Endothelial cell of umbilical vein (primary cell): ENCODE measurements at regions of chr12 and their contacts with region 1.

Region 1: GRCh38 chr12:88897723-88898122 is 317.5 kb upstream of the KITLG start:
- DNase-seq: peak; percentile 95
- H3K4me3 ChIP-seq: no peak overlapping the region
- H3K27ac ChIP-seq: peak overlapping the region; percentile 98
- H3K4me1 ChIP-seq: peaks cover 31% of the 10 kb centered on the region
- H3K27me3 ChIP-seq: no peaks in the 10 kb centered on the region
- CTCF ChIP-seq: no peak
- POLR2A ChIP-seq: no peak

Region 2: DNA sequence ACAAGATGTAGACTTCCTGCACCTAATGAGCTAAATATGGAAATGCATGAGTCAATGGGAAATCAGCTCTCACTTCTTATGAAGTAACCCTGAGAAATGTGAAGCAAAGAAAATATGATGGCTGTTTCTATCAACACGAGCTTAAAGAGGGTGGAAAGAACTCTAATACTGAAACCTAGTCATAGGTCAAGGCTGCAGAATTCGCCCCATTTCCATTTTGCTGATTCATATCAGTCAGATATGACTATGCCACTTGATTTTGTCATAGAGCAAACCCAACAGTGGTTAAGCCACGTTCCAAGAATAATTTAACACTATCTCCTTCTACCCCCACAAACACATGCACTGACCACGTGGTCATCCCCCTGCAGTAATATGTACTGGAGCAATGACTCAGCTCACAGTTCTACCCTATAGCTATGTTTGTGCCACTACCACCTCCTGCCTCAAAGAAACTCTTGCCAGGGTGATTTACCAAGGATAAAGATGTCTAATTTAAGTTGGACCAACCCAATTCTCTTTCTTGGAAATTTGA is 598.1 kb before region 1 on chr12:
- CTCF ChIA-PET with region 1: no interaction called
- POLR2A ChIA-PET with region 1: no interaction called
- dilution Hi-C with region 1: no loop called
- intact Hi-C with region 1: loop called (anchors 1 kb)
- DNase-seq: peak; percentile 96
- H3K4me3 ChIP-seq: no peak overlapping the region
- H3K27ac ChIP-seq: peak overlapping the region; percentile 88
- H3K4me1 ChIP-seq: peaks cover 27% of the 10 kb centered on the region
- H3K27me3 ChIP-seq: no peaks in the 10 kb centered on the region
- CTCF ChIP-seq: no peak
- POLR2A ChIP-seq: peak; percentile 31

Region 3: DNA sequence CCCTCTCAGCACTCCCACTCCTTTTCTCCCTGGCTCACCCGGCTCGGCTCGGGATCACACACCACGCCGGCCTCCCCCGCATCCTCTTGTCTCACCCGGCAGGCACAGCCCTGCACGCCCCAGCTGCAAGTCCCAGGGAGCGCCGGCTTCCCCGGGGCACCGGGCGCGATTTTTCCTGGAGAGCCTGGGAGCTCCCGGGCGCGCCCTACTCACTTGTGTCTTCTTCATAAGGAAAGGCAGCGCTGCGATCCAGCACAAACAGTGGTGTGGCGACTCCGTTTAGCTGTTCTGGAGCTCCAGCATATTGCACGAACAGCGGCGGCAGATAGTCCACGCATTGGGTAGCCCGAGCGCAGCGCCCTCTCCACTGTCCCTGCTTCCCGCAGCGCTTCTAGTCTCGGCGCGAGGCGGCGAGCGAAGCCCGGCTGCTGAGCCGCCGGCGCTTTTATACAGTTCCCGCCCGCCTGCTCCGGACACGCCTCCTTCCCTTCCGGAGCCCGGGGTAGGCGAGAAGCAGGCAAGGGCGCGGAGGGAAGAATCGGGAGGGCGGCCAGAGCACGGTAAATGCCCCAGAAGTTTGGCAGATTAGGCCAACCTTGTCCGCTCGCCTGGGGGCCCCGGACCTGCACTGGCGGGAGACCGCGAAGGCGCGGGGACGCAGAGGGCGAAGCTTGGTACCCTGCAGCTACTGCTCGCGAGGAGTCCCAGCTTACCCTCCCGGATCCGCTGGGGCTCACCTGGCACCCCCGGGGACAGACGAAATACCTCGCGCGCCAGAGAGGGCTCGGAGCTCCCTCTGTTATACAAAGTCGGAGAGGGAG is 317.5 kb before region 1 on chr12 and contains the start of gene KITLG:
- CTCF ChIA-PET with region 1: interaction called, 9 read pairs
- POLR2A ChIA-PET with region 1: interaction called, 13 read pairs
- dilution Hi-C with region 1: no loop called
- intact Hi-C with region 1: loop called (anchors 1 kb)
- DNase-seq: peak; percentile 88
- H3K4me3 ChIP-seq: peak within 1 kb of the TSS; percentile 54 to 69 (median 62)
- H3K27ac ChIP-seq: peak within 1 kb of the TSS; percentile 37
- H3K4me1 ChIP-seq: peaks cover 17% of the 10 kb centered on the region
- H3K27me3 ChIP-seq: no peaks in the 10 kb centered on the region
- CTCF ChIP-seq: peak; percentile 9 to 51
- POLR2A ChIP-seq: peak; percentile 99
- total RNA-seq, gene KITLG: 32.5 and 46.4 TPM in 2 replicates

Region 4: DNA sequence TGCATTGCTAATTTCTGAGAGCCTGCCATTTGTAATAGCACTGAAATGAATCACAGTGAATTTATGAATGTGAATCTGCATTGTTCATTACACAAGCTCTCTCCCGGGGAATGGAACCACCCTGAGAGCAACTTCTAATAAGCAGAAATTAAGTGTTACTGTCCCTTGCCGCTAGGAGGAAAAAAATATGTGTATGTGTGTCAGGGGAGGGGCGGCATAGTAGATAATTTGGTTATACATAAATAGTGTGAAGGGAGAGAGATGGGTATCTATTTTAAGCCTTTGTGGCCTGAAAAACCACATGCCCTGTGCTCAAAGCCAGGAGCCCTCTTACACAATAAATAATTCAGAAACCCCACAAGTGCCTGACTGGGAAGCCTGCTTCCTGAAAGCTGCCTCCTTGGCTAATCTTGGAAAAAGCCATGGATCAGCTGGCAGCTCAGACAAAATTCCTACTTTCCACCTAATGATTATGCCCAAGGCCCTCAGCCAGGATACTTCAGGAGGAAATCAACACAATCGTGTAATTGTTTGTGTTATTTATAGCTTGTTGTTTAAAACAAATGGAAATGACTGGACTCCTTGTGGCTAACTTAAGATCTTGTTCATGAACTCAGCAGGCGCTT is 48.8 kb after region 1 on chr12:
- CTCF ChIA-PET with region 1: interaction called, 5 read pairs
- POLR2A ChIA-PET with region 1: interaction called, 3 read pairs
- dilution Hi-C with region 1: no loop called
- intact Hi-C with region 1: loop called (anchors 1 kb)
- DNase-seq: peak; percentile 89
- H3K4me3 ChIP-seq: no peak overlapping the region
- H3K27ac ChIP-seq: peak overlapping the region; percentile 92
- H3K4me1 ChIP-seq: peaks cover 42% of the 10 kb centered on the region
- H3K27me3 ChIP-seq: no peaks in the 10 kb centered on the region
- CTCF ChIP-seq: no peak
- POLR2A ChIP-seq: no peak

Region 5: DNA sequence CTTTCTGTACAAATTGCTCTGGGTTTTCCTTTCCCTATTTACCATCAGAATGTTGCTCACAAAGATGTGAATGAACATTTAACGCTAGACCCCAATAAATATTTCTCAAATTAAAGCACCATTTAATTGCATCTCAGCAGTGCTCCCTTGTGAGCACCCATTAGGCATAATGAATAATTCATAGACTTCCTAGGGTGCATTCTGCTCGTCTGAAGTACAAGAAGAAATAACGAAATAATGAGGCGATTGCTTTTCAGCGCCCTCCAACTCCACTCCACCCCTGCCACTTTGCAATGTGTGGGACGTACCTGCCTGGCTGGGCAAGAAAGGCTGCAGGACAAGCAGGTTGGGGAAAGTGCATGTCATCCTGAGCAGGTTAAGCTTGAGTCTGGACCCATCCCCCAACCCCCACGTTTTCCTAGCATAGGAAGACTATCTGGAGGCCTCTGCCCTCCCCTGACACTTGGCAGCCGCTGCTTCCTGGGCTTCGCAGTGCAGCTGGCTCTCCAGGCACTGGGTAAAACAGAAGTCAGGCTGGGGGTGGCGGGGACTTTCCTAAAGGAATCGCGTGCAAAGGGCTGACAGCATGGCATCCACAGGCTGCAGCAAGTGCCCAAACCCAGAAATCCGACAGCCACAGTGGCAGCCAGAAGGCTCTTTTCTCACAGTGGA is 200.9 kb after region 1 on chr12:
- CTCF ChIA-PET with region 1: no interaction called
- POLR2A ChIA-PET with region 1: no interaction called
- dilution Hi-C with region 1: no loop called
- intact Hi-C with region 1: no loop called
- DNase-seq: no peak
- H3K4me3 ChIP-seq: no peak overlapping the region
- H3K27ac ChIP-seq: no peak overlapping the region
- H3K4me1 ChIP-seq: no peaks in the 10 kb centered on the region
- H3K27me3 ChIP-seq: no peaks in the 10 kb centered on the region
- CTCF ChIP-seq: no peak
- POLR2A ChIP-seq: no peak

Region 6: DNA sequence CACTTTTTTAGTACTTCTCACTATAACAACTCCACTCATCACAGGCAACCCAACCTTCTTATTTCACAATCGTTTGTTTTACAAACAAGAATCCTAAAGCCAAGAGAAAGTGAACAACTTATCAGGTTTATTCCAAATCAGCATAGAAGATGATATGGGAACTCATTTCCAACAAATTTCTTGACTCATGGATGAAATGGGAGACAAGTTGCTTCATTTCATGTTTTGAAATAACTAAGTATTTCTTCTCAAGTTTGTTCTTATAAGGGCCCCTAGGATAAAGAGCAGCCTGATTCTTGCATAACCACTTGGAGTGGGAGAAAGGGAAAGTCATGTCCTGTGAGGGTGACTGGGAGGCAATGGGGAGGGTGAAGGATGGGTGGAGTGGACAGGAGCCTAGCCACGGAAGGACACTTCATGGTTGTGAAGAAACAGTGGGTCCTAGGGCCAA is 286.3 kb after region 1 on chr12:
- CTCF ChIA-PET with region 1: no interaction called
- POLR2A ChIA-PET with region 1: no interaction called
- dilution Hi-C with region 1: no loop called
- intact Hi-C with region 1: no loop called
- DNase-seq: no peak
- H3K4me3 ChIP-seq: no peak overlapping the region
- H3K27ac ChIP-seq: no peak overlapping the region
- H3K4me1 ChIP-seq: peaks cover 18% of the 10 kb centered on the region
- H3K27me3 ChIP-seq: no peaks in the 10 kb centered on the region
- CTCF ChIP-seq: no peak
- POLR2A ChIP-seq: no peak

Region 7: GRCh38 chr12:89352492-89353187 is 454.9 kb after region 1 on chr12 and contains the start of gene DUSP6:
- CTCF ChIA-PET with region 1: no interaction called
- POLR2A ChIA-PET with region 1: no interaction called
- dilution Hi-C with region 1: no loop called
- intact Hi-C with region 1: loop called (anchors 1 kb)
- DNase-seq: peak; percentile 100
- H3K4me3 ChIP-seq: peak within 1 kb of the TSS; percentile 72 to 97 (median 90)
- H3K27ac ChIP-seq: peak within 1 kb of the TSS; percentile 88
- H3K4me1 ChIP-seq: peaks cover 37% of the 10 kb centered on the region
- H3K27me3 ChIP-seq: no peaks in the 10 kb centered on the region
- CTCF ChIP-seq: no peak
- POLR2A ChIP-seq: no peak
- total RNA-seq, gene DUSP6: 148 and 200 TPM in 2 replicates

Region 8: GRCh38 chr12:89524541-89525285 is 627.0 kb after region 1 on chr12 and contains the start of gene GALNT4:
- CTCF ChIA-PET with region 1: no interaction called
- POLR2A ChIA-PET with region 1: no interaction called
- dilution Hi-C with region 1: no loop called
- intact Hi-C with region 1: loop called (anchors 1 kb)
- DNase-seq: peak; percentile 92
- H3K4me3 ChIP-seq: peak within 1 kb of the TSS; percentile 16 to 92 (median 59)
- H3K27ac ChIP-seq: peak within 1 kb of the TSS; percentile 35
- H3K4me1 ChIP-seq: peaks cover 32% of the 10 kb centered on the region
- H3K27me3 ChIP-seq: no peaks in the 10 kb centered on the region
- CTCF ChIP-seq: peak; percentile 40 to 82
- POLR2A ChIP-seq: peak; percentile 25
- total RNA-seq, gene GALNT4: 9.8 and 10.9 TPM in 2 replicates